ENCODE measurements at regions of chr6 and their contacts with region 1.

Region 1: DNA sequence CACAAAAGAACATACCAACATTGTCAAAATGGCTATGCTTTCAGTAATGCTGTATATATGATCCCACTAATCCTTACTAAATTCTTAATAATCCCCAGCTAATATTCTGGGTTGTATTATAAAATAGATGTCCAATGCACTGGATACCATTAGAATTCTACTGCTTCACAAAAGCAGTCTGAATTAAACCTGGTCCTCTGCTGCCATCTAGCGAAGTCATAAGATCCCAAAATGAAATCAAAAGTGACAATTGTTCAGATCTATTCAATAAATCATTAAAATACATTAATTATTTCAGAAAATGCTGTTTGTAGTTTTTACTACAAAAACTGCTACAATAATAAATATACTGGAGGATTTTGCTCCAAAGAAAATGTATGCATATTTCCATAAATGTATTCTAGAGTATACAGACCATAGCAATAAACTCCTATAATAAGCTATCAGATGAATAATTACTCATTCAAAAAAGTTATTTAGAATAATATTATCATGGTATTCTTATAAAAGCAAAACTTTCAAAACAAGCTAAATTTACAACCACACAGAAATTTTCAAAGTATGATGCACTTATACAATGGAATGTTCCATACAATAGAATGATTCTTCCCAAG is 92.6 kb downstream of the RNGTT start:
- DNase-seq: peak in 26 of 35 experiments; percentile 0 to 79 (median 26)
- ATAC-seq: peak in 1 of 4 experiments; percentile 50
- H3K4me3 ChIP-seq: no peak overlapping the region
- H3K4me3 Mint-ChIP-seq: no peak overlapping the region
- H3K27ac ChIP-seq: no peak overlapping the region
- H3K27ac Mint-ChIP-seq: no peak overlapping the region
- H3K4me1 ChIP-seq: peaks cover 0 to 5% of the 10 kb centered on the region in 2 experiments
- H3K4me1 Mint-ChIP-seq: peaks cover 15 to 29% (median 18%) of the 10 kb centered on the region in 3 donors
- H3K27me3 ChIP-seq: no peaks in the 10 kb centered on the region
- H3K27me3 Mint-ChIP-seq: no peaks in the 10 kb centered on the region

Region 2: GRCh38 chr6:87393022-87393622 is 1477.7 kb before region 1 on chr6:
- CTCF ChIA-PET with region 1: interaction called, 5 to 18 read pairs
- POLR2A ChIA-PET with region 1: no interaction called
- DNase-seq: peak in 20 of 35 experiments; percentile 1 to 81 (median 22)
- ATAC-seq: peak; percentile 82 to 87 (median 85)
- H3K4me3 ChIP-seq: no peak overlapping the region
- H3K4me3 Mint-ChIP-seq: no peak overlapping the region
- H3K27ac ChIP-seq: no peak overlapping the region
- H3K27ac Mint-ChIP-seq: no peak overlapping the region
- H3K4me1 ChIP-seq: no peaks in the 10 kb centered on the region
- H3K4me1 Mint-ChIP-seq: peaks cover 0 to 2% (median 1%) of the 10 kb centered on the region in 3 donors
- H3K27me3 ChIP-seq: no peaks in the 10 kb centered on the region
- H3K27me3 Mint-ChIP-seq: no peaks in the 10 kb centered on the region

Region 3: DNA sequence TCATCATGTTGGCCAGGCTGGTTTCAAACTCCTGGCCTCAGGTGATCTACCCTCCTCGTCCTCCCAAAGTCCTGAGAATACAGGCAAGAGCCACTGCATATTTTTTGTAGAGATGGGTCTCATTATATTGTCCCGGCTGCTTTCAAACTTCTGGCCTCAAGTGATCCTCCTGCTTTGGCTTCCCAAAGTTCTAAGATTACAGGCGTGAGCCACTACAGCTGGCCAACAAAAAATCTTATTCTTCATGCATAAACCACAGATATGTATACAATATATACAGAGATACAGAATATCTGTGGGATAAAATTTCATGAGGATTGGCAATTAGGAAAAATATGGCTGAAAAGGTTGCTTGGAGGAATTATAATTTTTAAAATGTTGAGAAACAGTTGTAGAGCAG is 1348.1 kb before region 1 on chr6:
- CTCF ChIA-PET with region 1: no interaction called
- POLR2A ChIA-PET with region 1: interaction called in 1 of 2 experiments, 15 read pairs
- DNase-seq: no peak
- ATAC-seq: no peak
- H3K4me3 ChIP-seq: no peak overlapping the region
- H3K4me3 Mint-ChIP-seq: no peak overlapping the region
- H3K27ac ChIP-seq: no peak overlapping the region
- H3K27ac Mint-ChIP-seq: no peak overlapping the region
- H3K4me1 ChIP-seq: no peaks in the 10 kb centered on the region
- H3K4me1 Mint-ChIP-seq: peaks cover 0 to 6% (median 2%) of the 10 kb centered on the region in 3 donors
- H3K27me3 ChIP-seq: no peaks in the 10 kb centered on the region
- H3K27me3 Mint-ChIP-seq: no peaks in the 10 kb centered on the region

Region 4: GRCh38 chr6:87832025-87832825 is 1038.6 kb before region 1 on chr6:
- CTCF ChIA-PET with region 1: interaction called, 9 to 18 read pairs
- POLR2A ChIA-PET with region 1: no interaction called
- DNase-seq: peak in 4 of 35 experiments; percentile 1 to 49 (median 12)
- ATAC-seq: peak; percentile 59 to 82 (median 74)
- H3K4me3 ChIP-seq: peak overlapping the region; percentile 45 to 48
- H3K4me3 Mint-ChIP-seq: peak overlapping the region; percentile 77 to 87 (median 81)
- H3K27ac ChIP-seq: peak overlapping the region; percentile 50
- H3K27ac Mint-ChIP-seq: peak overlapping the region; percentile 89 to 93
- H3K4me1 ChIP-seq: peaks cover 0 to 5% of the 10 kb centered on the region in 2 experiments
- H3K4me1 Mint-ChIP-seq: peaks cover 11 to 14% (median 11%) of the 10 kb centered on the region in 3 donors
- H3K27me3 ChIP-seq: no peaks in the 10 kb centered on the region
- H3K27me3 Mint-ChIP-seq: peaks cover 1 to 5% of the 10 kb centered on the region in 2 donors

Region 5: DNA sequence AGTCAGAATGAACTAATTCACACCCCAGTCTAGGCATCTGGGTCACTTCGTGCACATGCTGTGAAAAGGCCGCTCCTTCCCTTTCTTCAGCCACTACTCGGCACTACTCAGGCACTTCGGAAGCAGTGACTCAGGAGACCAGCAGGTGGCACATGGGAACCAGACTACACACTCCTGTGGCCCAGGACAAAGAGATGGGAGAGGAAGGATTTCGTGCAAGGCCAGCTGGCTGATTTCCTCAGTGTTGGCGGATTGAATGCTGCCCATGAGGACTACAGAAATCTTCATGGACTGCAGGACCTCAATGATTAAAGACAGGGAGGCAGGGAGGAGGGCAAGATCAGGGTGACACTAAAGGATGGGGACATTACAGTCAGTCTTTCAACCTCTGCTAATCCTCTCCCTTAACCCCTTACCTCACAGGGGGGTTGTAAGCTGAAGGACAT is 941.0 kb before region 1 on chr6:
- CTCF ChIA-PET with region 1: interaction called, 21 to 41 read pairs
- POLR2A ChIA-PET with region 1: interaction called in 1 of 2 experiments, 3 read pairs
- DNase-seq: peak; percentile 4 to 69 (median 39)
- ATAC-seq: peak in 3 of 4 experiments; percentile 61 to 75 (median 64)
- H3K4me3 ChIP-seq: no peak overlapping the region
- H3K4me3 Mint-ChIP-seq: no peak overlapping the region
- H3K27ac ChIP-seq: no peak overlapping the region
- H3K27ac Mint-ChIP-seq: no peak overlapping the region
- H3K4me1 ChIP-seq: peaks cover 0 to 14% of the 10 kb centered on the region in 2 experiments
- H3K4me1 Mint-ChIP-seq: peaks cover 0 to 14% (median 6%) of the 10 kb centered on the region in 3 donors
- H3K27me3 ChIP-seq: no peaks in the 10 kb centered on the region
- H3K27me3 Mint-ChIP-seq: peaks cover 0 to 3% of the 10 kb centered on the region in 2 donors

Region 6: DNA sequence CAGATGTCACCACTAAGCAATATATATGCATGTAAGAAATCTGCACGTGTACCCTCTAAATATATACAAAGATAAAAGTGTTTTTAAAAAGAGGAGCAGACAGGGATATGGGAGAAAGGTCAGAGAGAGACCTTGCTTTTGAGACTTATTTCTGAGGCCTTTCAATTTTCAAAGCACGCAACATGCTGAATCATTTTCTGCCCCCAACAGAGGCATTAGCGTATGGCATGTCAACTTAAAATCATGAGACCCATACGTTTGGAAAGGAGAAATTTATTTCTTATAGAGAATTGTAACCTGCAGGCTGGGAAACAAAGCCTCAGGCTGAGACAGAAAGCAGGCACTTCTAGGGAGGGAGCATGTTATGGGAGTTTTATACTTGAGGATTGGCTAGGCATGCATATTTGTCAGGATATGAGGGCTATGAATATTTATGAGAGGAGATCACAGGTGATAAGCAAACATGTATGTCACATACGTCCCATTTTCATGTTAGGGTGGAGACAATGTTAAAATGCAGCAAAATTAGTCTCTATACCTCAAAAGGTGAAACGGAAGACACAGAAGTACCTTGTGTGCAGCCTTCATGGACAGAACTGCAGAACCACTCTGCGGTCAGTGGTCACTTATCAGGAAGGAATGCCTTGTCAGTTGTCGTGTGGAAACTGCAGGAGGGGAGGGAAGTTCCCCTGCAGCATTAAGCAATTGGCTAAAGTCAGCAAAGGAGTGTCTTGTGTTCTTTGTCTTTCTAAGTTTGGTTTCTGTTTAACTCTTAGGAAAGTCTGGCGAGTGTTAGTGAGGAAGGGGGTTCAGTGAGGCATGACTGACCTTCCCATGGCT is 450.5 kb after region 1 on chr6:
- CTCF ChIA-PET with region 1: no interaction called
- POLR2A ChIA-PET with region 1: no interaction called
- DNase-seq: peak in 2 of 35 experiments; percentile 10 to 27
- ATAC-seq: no peak
- H3K4me3 ChIP-seq: no peak overlapping the region
- H3K4me3 Mint-ChIP-seq: no peak overlapping the region
- H3K27ac ChIP-seq: no peak overlapping the region
- H3K27ac Mint-ChIP-seq: no peak overlapping the region
- H3K4me1 ChIP-seq: no peaks in the 10 kb centered on the region
- H3K4me1 Mint-ChIP-seq: peaks cover 0 to 7% (median 3%) of the 10 kb centered on the region in 3 donors
- H3K27me3 ChIP-seq: no peaks in the 10 kb centered on the region
- H3K27me3 Mint-ChIP-seq: no peaks in the 10 kb centered on the region

Region 7: DNA sequence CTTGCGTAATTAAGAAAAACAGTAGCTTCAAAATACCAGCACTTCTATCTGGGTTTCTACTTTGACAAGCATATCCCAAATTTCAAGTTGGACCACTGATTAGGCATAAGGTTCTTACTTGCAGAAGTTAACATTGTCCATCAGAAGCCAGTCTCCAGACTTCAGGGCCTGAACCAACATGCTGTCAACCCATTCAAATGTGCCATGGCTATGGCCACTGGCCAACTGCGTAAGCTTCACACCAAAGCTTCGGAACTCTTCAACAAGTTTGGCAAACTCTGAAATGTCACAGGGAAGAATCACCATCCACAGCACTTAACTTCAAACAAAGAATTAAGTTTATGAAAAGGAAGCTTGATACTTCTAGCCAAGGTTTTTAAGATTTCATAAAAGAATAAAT is 845.7 kb after region 1 on chr6:
- CTCF ChIA-PET with region 1: no interaction called
- POLR2A ChIA-PET with region 1: no interaction called
- DNase-seq: no peak
- ATAC-seq: no peak
- H3K4me3 ChIP-seq: no peak overlapping the region
- H3K4me3 Mint-ChIP-seq: no peak overlapping the region
- H3K27ac ChIP-seq: no peak overlapping the region
- H3K27ac Mint-ChIP-seq: no peak overlapping the region
- H3K4me1 ChIP-seq: no peaks in the 10 kb centered on the region
- H3K4me1 Mint-ChIP-seq: no peaks in the 10 kb centered on the region
- H3K27me3 ChIP-seq: no peaks in the 10 kb centered on the region
- H3K27me3 Mint-ChIP-seq: no peaks in the 10 kb centered on the region

Measured in T-cell (primary cell).